ENCODE measurements at regions of chr15 and their contacts with region 1.

Region 1: GRCh38 chr15:75508840-75509532 is 57.5 kb upstream of the SIN3A start:
- DNase-seq: peak; percentile 25
- CTCF ChIP-seq: peak; percentile 43

Region 2: DNA sequence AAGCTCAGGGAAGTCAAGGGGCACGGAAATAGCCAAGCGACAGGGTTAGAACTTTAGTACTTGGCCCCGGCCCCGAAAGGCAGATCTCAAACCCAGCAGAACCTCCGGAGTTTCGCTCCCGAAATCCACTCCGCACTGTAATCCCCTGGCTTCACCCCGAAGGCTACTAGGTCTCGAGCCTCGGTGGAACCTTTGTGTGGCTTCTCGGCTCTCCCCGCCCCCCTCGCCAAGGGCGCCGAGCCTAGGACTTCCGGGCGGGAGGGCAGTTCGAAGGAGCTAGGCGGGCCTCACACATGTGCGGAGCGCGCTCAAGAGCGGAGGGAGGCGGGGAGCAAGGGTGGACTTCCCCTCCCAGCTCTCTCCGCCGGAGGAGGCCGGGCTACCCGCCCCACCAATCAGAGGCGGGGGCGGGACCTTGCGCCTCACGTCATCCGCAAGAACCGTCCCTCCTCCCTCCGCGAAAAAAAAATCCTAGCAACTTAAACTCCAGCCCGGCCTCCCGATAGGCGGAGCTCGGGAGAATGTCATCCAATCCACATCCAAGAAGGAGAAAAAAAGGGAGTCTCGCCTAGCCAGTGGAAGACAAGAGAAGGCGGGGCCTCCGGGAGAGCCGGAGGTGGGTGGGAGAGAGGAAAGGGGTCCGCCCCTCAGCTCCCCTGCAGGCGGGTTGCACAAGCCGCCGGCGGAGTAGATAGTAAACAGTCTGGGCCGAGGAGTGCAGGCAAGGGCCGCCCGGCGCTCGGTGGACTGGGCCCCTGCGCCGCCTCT is 55.1 kb before region 1 on chr15:
- CTCF ChIA-PET with region 1: no interaction called
- POLR2A ChIA-PET with region 1: no interaction called
- DNase-seq: peak; percentile 93
- CTCF ChIP-seq: no peak

Region 3: DNA sequence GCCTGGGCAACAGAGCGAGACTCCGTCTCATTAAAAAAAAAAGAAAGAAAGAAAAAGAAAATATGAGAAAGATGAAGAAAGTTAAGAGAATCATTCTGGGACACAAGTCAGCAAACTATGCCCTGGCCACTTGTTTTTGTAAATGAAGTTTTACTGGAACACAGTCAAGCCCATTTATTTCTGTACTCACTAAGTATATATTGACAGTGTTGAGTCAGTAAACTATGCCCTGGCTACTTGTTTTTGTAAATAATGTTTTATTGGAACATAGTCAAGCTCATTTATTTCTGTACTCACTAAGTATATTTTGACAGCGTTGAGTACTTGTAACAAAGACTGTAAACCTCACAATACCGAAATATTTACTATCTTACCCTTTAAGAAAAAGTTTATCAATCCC is 15.3 kb before region 1 on chr15:
- CTCF ChIA-PET with region 1: interaction called, 14 read pairs
- POLR2A ChIA-PET with region 1: no interaction called
- DNase-seq: no peak
- CTCF ChIP-seq: no peak

Region 4: DNA sequence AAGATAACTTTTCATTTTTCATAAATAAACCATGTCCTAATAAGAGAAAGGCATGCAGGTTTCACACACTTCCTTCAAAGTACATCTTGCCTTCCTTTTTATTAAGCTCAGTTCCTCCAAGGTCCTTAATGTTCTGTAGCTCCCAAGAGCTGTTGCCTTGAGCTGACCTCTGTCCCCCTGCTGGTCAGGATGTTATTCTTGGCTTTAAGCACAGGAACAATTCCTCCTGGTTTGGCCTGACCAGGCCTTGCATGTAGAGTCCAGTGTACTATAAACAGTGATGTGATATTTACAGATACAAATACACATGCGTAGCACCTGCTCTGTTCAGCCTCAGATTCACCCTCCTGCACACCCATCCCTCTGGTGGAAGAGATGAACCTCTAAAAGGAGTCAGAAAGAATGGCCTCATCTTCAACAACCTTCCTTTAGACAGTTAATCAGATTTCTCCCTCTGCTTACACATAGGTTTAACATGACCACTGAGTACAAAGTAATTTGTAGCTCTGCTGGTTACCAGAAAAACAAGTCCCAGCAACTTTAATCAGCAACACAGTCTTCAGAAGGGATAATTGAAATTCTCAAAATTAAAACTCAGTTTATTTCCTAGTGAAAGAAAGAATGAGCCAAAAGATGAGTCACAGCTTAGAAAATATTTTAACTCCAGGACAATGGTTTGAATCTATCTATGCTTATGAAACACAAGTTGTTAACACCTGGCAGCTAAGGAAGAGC is 23.6 kb after region 1 on chr15:
- CTCF ChIA-PET with region 1: interaction called, 13 read pairs
- POLR2A ChIA-PET with region 1: no interaction called
- DNase-seq: no peak
- CTCF ChIP-seq: peak; percentile 34

Region 5: DNA sequence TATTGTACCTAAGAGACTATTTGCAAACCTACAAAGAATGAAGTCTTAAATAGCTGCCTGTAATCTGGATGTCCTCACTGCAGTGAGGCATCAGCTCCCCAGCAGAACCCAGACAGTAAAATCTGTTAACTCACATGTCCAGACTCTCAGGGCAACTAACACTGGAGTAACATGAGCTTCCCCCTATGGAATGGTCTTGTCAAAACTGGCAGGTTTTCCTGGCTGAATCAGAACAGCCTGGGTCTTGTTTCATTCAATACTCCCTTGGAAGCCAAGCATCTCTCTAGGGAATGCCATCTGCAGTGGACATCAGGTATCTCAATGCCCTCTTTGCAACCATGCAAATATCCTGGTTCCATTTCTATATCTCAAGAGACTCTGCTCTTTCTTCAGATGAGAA is 45.7 kb after region 1 on chr15:
- CTCF ChIA-PET with region 1: no interaction called
- POLR2A ChIA-PET with region 1: no interaction called
- DNase-seq: no peak
- CTCF ChIP-seq: no peak

Region 6: DNA sequence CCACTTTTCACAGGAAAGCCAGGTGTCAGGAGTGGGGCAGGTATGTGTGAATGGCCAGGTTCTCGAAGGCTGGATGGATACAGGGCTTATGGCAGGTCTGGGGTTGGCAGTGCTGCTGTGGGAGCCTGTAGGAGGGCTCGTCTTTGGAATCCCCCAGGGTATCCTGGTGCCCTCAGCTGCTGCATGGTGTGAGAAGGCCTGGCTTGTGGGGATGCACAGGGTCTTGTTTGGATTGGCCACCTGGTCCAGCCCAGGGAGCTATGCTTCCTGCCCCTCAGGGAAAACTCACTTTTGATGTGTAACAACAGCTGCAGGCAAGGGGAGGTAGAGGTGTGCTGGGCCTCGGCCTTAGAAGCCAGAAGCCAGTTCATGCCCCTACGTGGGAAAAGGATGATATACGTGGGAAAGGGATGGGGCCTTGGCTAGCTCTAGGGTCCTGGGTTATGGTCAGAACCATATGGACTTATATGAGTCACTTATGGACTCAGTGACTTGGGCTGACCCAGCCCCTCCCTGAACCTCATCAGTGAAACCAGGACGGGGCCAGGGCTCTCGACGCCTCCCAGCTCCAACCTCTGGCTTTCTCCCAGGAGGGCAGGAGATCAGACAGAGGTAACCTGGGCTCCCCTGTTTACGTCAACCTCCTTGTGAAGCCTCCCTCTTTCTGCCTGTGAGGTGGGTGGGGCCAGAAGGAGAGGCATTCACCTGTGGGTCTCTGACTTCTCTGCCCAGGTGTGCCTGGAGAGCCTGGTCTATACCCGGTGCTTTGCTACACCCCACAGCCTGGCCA is 241.5 kb after region 1 on chr15:
- CTCF ChIA-PET with region 1: no interaction called
- POLR2A ChIA-PET with region 1: no interaction called
- DNase-seq: no peak
- CTCF ChIP-seq: no peak

Measured in GM10248 (cell line).